ENCODE measurements at regions of chr2 and their contacts with region 1.

Region 1: DNA sequence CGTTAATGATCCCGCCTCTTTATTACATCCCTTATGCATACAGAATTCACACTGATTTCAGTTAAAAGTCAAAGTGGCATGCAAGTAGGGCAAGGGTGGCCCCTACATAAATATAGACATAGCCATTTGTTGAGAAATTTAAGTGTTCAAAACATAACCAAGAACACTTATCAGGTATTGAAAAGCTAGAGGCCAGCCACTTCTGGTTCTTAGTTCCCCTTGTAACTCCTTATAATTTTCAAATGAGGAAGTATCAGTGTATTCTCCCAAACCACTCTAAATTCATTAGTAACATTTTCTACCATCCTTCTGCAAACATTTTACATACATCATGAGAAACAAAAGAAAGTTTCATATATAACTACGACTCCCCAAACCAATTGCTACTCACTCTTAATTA is 5.8 kb upstream of the ARL5A start:
- DNase-seq: no peak
- ATAC-seq: no peak
- H3K4me3 ChIP-seq: no peak overlapping the region
- H3K27ac ChIP-seq: no peak overlapping the region
- H3K4me1 ChIP-seq: peaks cover under 1% of the 10 kb centered on the region
- H3K27me3 ChIP-seq: no peaks in the 10 kb centered on the region
- CTCF ChIP-seq: no peak

Region 2: DNA sequence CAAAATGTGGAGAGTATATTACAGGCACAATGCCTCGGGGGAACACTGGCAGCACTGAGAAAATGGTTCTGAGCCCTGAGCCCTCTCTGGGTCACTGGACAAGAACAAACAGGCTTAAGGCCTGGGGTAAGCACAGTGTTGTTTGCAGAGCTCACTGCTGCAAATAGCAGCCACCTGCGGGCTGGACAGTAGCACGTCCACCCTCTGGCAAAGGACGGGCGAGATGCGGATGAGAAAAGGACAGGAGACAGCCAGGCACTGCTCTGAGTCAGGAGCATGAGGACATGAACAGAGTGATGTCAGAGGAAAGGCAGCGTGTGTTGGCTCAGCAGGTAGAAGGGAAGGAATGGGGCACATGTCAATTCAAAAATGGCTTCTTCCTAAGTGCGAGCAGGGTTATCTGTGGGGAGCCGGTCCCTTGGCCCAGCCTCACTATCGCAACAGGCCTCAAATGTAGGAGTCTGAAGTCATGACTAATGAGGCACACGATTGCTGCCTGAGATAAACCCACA is 73.8 kb before region 1 on chr2:
- intact Hi-C with region 1: no loop called
- DNase-seq: peak; percentile 73 to 92
- ATAC-seq: peak; percentile 96 to 99 (median 98)
- H3K4me3 ChIP-seq: no peak overlapping the region
- H3K27ac ChIP-seq: peak overlapping the region; percentile 93
- H3K4me1 ChIP-seq: peaks cover 35% of the 10 kb centered on the region
- H3K27me3 ChIP-seq: no peaks in the 10 kb centered on the region
- CTCF ChIP-seq: no peak

Region 3: DNA sequence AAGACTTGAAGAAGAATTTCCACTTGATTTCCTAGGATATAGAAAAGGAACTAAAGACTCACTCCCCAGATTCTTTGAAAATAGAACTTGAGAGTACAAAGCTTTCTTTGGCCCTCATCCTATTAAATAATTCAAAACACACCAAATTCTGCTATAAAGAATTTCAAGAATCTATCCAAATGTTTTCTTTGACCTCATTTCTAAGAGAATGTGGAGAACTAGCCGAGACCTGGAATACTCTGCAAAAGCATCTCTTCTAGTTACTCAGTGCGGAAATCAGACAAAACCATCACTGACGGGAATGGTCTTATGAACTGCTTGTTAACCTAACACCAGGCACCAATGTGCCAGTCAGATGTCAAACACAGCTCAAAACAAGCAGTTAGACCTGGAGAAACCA is 38.5 kb after region 1 on chr2:
- intact Hi-C with region 1: loop called in 1 of 2 experiments (anchors 5 kb)
- DNase-seq: no peak
- ATAC-seq: no peak
- H3K4me3 ChIP-seq: no peak overlapping the region
- H3K27ac ChIP-seq: no peak overlapping the region
- H3K4me1 ChIP-seq: no peaks in the 10 kb centered on the region
- H3K27me3 ChIP-seq: no peaks in the 10 kb centered on the region
- CTCF ChIP-seq: no peak

Region 4: GRCh38 chr2:152005607-152006006 is 171.6 kb after region 1 on chr2:
- intact Hi-C with region 1: loop called (anchors 5 to 10 kb)
- DNase-seq: no peak
- ATAC-seq: no peak
- H3K4me3 ChIP-seq: no peak overlapping the region
- H3K27ac ChIP-seq: no peak overlapping the region
- H3K4me1 ChIP-seq: peaks cover 12% of the 10 kb centered on the region
- H3K27me3 ChIP-seq: no peaks in the 10 kb centered on the region
- CTCF ChIP-seq: no peak